PC-9 (cell line): ENCODE measurements at regions of chr12 and their contacts with region 1.

Region 1: GRCh38 chr12:94615284-94616181 is 34.8 kb downstream of the TMCC3 start:
- DNase-seq: peak; percentile 69 to 86
- H3K4me3 ChIP-seq: peak overlapping the region; percentile 48
- H3K27ac ChIP-seq: peak overlapping the region; percentile 91
- H3K4me1 ChIP-seq: peaks cover 68% of the 10 kb centered on the region
- H3K27me3 ChIP-seq: no peaks in the 10 kb centered on the region
- CTCF ChIP-seq: no peak

Region 2: DNA sequence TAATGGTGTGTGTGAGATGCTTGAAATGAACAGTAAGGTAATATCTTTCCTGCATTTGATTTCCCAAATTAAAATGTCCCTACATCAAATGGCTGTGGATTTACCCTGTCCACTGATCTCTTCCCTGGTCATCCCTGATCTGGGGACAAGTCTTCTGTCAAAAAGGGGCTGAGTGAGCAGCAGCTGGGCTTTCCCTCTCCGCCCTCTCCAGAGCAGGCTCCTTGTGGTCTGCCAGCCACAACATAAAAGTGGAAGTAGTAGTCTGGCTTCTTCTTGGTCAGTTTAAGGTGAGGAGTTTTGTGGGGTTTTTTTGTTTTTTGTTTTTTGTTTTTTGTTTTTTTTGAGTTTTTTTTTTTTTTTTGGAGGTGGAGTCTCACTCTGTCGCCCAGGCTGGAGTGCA is 492.4 kb before region 1 on chr12:
- CTCF ChIA-PET with region 1: no interaction called
- POLR2A ChIA-PET with region 1: no interaction called
- intact Hi-C with region 1: no loop called
- DNase-seq: no peak
- H3K4me3 ChIP-seq: no peak overlapping the region
- H3K27ac ChIP-seq: no peak overlapping the region
- H3K4me1 ChIP-seq: 0 out of 2 replicates have a peak, but pooled peaks cover 8% of the 10 kb centered on the region
- H3K27me3 ChIP-seq: 0 out of 2 replicates have a peak, but pooled peaks cover 9% of the 10 kb centered on the region
- CTCF ChIP-seq: no peak

Region 3: DNA sequence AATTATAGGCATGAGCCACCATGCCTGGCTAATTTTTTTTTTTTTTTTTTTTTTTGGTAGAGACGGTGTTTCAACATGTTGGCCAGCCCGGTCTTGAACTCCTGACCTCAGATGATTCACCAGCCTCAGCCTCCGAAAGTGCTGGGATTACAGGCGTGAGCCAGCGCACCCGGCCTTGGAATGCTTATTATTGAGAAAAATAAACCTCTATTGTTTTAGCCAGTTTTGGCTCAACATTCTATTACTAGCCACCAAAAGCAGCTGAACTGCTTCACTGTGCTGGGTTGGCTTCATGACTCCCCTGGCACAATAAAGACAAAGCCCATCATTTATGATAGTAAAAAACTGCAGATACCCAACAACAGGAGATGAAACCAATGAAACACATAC is 62.4 kb before region 1 on chr12:
- CTCF ChIA-PET with region 1: no interaction called
- POLR2A ChIA-PET with region 1: no interaction called
- intact Hi-C with region 1: loop called (anchors 2 kb)
- DNase-seq: peak; percentile 81 to 87
- H3K4me3 ChIP-seq: no peak overlapping the region; the same call in 1 of the 2 replicates
- H3K27ac ChIP-seq: peak overlapping the region; percentile 92
- H3K4me1 ChIP-seq: peaks cover 51% of the 10 kb centered on the region
- H3K27me3 ChIP-seq: no peaks in the 10 kb centered on the region
- CTCF ChIP-seq: no peak

Region 4: DNA sequence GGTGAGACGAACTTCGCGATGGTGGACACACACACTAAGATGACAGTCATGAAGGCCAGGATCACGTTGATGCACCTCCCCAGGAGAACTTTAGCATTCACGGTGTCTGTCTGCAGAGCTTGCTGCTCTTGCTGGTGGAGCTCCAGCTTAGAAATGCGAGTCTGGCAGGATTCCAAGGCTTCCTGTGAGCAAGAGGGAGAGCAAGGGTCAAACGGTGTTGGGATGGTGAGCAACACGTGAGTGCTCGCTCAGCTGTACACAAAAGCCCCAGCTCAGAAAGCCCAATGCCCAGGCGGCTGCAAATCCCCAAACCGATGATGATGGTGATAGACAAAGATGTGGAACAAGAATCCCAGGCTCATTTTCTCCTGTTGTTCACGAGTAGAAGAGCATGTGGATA is 44.0 kb before region 1 on chr12:
- CTCF ChIA-PET with region 1: no interaction called
- POLR2A ChIA-PET with region 1: no interaction called
- intact Hi-C with region 1: loop called (anchors 2 kb)
- DNase-seq: peak; percentile 74 to 77
- H3K4me3 ChIP-seq: no peak overlapping the region
- H3K27ac ChIP-seq: peak overlapping the region; percentile 72
- H3K4me1 ChIP-seq: peaks cover 36% of the 10 kb centered on the region
- H3K27me3 ChIP-seq: no peaks in the 10 kb centered on the region
- CTCF ChIP-seq: no peak

Region 5: DNA sequence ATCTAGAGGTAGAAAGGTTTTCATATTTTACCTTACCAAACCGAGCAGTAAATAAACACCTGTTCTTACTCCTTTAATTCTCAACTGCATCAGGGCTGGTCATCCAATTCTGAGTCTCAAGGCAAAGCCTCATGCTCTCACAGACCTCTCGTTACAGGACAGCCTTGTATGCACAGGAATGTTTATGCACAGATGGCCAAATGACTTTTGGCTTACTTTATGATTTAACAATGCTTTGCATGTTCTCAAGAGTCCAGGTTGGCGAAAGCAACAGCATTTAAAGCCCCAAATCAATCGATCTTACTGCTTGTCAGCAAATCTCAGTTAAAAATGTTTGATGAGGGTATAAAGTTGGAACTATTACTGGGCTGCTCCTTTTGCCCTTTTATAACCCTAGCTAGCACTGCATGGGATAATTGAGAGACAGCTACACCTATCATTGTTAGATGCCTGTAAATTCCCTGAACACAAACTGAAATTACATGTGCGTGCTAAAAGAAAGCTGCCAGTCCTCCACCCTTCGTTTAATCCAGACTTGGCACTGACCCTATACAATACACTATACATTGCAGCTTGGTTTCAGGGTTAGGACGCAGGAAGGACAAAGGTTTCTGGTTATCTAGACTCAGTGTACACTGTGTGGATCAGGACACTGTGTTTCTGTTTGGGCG is 28.8 kb before region 1 on chr12:
- CTCF ChIA-PET with region 1: no interaction called
- POLR2A ChIA-PET with region 1: interaction called, 10 read pairs
- intact Hi-C with region 1: no loop called
- DNase-seq: peak in 1 of 2 experiments; percentile 52
- H3K4me3 ChIP-seq: no peak overlapping the region
- H3K27ac ChIP-seq: peak overlapping the region; percentile 10; the same call in 1 of the 2 replicates
- H3K4me1 ChIP-seq: peaks cover 35% of the 10 kb centered on the region
- H3K27me3 ChIP-seq: no peaks in the 10 kb centered on the region
- CTCF ChIP-seq: no peak

Region 6: DNA sequence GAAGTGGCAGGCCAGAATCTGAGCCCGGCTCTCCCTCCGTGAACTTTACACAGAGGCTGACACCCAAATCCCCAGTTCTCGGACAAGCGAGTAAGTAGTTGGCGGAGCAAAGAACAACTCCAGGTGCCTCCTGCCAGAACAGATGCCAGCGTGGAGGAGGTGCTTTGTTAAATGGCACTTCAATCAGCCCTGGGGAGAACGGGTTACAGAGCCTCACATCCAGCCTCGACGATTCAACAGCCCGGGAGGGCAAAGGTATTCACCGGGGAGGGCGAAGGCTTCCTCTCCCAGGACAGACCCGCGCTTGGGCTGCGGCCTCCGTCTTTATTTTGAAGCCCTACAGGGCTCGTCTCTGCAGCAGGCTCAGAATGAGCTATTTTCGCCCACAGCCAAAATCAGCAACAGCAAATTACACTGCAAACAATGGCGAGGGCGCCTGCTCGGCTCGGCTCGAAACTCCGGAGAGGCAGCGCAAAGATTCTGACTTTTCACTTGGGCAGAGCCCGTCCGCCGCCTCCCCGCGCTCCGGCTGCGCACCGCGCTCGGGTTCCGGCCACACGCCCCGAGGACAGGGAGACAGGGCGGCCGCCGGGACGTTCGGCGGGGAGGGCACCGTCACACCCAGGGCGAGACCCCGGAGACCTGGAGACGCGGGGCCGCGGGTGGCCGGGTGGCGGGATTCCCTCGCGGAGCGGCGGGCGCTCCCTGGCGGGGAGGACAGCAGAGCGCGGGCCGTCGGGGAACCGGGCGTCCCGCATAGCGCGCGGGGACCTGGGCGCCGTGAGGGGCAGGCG is 34.0 kb after region 1 on chr12:
- CTCF ChIA-PET with region 1: no interaction called
- POLR2A ChIA-PET with region 1: interaction called, 6 read pairs
- intact Hi-C with region 1: loop called (anchors 2 kb)
- DNase-seq: peak in 1 of 2 experiments; percentile 54
- H3K4me3 ChIP-seq: peak overlapping the region; percentile 91
- H3K27ac ChIP-seq: peak overlapping the region; percentile 69
- H3K4me1 ChIP-seq: peaks cover 41% of the 10 kb centered on the region
- H3K27me3 ChIP-seq: no peaks in the 10 kb centered on the region
- CTCF ChIP-seq: no peak; the same call in 1 of the 2 replicates

Region 7: DNA sequence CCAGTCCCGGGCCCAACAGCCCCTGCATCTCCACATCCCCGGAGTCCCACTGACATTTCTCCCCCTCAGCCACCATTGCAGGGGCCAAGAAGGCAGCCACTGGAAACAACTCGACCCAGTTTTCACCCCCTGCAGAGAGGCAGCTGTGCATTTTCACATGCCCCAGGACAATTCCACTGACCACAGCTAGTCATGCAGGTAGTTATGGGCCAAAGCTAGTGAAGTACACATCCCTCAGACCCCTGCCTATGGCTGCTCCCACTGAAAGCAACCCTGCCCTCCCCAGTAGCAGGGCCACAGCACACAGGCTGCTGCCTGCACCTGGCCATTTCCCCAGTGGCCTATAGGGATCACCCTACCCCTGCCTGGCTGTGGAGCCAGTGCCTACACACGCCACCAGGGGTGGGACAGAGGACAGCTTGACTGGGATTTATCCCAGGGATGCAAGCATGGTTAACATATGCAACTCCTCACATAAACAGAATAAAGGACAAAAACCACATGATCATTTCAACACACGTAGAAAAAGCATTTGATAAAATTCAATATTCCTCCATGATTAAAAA is 234.0 kb after region 1 on chr12:
- CTCF ChIA-PET with region 1: no interaction called
- POLR2A ChIA-PET with region 1: no interaction called
- intact Hi-C with region 1: no loop called
- DNase-seq: no peak
- H3K4me3 ChIP-seq: no peak overlapping the region
- H3K27ac ChIP-seq: no peak overlapping the region
- H3K4me1 ChIP-seq: no peaks in the 10 kb centered on the region
- H3K27me3 ChIP-seq: no peaks in the 10 kb centered on the region
- CTCF ChIP-seq: no peak